ENCODE measurements at regions of chr19 and their contacts with region 1.

Region 1: GRCh38 chr19:41883821-41884733 is 1.1 kb downstream of the ARHGEF1 start:
- DNase-seq: peak; percentile 98
- H3K4me3 ChIP-seq: peak overlapping the region; percentile 89
- H3K4me3 Mint-ChIP-seq: peak overlapping the region; percentile 91
- H3K27ac Mint-ChIP-seq: peak overlapping the region; percentile 83
- H3K4me1 ChIP-seq: peaks cover 24% of the 10 kb centered on the region
- H3K4me1 Mint-ChIP-seq: peaks cover 31% of the 10 kb centered on the region
- H3K27me3 ChIP-seq: no peaks in the 10 kb centered on the region
- H3K27me3 Mint-ChIP-seq: peaks cover 3% of the 10 kb centered on the region
- CTCF ChIP-seq: no peak

Region 2: DNA sequence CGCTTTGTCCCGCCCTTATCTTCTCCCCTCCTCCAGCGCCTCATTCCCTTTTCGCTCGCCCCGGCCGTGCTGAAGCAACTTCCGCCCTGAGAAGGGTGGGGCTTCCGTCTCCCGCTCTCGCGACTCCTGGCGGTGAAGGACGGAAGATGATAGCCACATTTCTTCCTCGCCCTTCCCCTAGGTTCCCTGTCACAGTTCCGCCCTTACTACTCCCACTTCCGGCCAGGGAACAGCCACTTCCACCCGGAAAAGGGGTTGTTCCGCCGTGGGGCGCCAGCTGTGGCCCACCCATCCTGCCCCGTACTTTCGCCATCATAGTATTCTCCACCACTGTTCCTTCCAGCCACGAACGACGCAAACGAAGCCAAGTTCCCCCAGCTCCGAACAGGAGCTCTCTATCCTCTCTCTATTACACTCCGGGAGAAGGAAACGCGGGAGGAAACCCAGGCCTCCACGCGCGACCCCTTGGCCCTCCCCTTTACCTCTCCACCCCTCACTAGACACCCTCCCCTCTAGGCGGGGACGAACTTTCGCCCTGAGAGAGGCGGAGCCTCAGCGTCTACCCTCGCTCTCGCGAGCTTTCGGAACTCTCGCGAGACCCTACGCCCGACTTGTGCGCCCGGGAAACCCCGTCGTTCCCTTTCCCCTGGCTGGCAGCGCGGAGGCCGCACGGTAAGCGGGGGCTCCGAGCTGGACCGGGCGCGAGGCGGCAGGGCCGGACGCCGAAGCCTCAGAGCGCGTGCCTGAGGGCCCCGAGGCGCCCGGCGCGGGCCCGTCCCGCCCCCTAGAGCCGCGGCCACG is 24.3 kb before region 1 on chr19 and contains the start of gene RPS19:
- CTCF ChIA-PET with region 1: interaction called, 5 read pairs
- POLR2A ChIA-PET with region 1: interaction called, 12 read pairs
- intact Hi-C with region 1: no loop called
- DNase-seq: peak; percentile 98 to 99
- H3K4me3 ChIP-seq: peak within 1 kb of the TSS; percentile 88
- H3K4me3 Mint-ChIP-seq: peak within 1 kb of the TSS; percentile 84
- H3K27ac Mint-ChIP-seq: peak within 1 kb of the TSS; percentile 94
- H3K4me1 ChIP-seq: peaks cover 18% of the 10 kb centered on the region
- H3K4me1 Mint-ChIP-seq: peaks cover 5% of the 10 kb centered on the region
- H3K27me3 ChIP-seq: no peaks in the 10 kb centered on the region
- H3K27me3 Mint-ChIP-seq: peaks cover 1% of the 10 kb centered on the region
- CTCF ChIP-seq: peak; percentile 63 to 81
- total RNA-seq, gene RPS19: 3,297 and 3,418 TPM in 2 replicates

Region 3: GRCh38 chr19:41904118-41904870 is 20.2 kb after region 1 on chr19:
- CTCF ChIA-PET with region 1: interaction called, 3 read pairs
- POLR2A ChIA-PET with region 1: no interaction called
- intact Hi-C with region 1: loop called (anchors 1 kb)
- DNase-seq: peak; percentile 92 to 97
- H3K4me3 ChIP-seq: no peak overlapping the region
- H3K4me3 Mint-ChIP-seq: peak overlapping the region; percentile 71
- H3K27ac Mint-ChIP-seq: peak overlapping the region; percentile 98
- H3K4me1 ChIP-seq: peaks cover 26% of the 10 kb centered on the region
- H3K4me1 Mint-ChIP-seq: peaks cover 28% of the 10 kb centered on the region
- H3K27me3 ChIP-seq: no peaks in the 10 kb centered on the region
- H3K27me3 Mint-ChIP-seq: no peaks in the 10 kb centered on the region
- CTCF ChIP-seq: no peak

Region 4: DNA sequence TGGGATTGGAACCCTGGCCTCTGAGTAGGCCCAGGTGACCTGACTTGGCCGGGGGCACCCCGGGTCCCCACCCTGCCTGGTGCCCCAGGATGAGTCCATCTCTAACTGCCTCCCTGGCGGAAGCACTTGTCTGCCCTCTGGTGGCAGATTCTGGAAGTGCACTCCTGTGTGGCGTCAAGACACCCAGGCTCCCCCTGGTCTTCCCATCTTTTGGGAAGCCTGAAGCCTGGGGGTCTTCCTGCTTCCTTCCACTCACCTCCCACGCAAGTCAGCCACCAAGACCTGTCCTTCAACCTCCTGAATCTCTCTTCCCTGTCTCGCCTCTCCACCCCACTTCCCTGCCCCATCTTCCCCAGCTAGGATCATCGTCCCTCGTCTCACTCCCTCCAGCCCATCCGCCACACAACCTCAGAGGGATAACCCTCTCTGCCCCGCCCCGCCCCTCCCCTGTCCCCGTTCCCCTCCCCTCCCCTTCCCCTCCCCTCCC is 67.7 kb after region 1 on chr19:
- CTCF ChIA-PET with region 1: interaction called, 5 read pairs
- POLR2A ChIA-PET with region 1: interaction called, 4 read pairs
- intact Hi-C with region 1: loop called (anchors 1 kb)
- DNase-seq: peak; percentile 84 to 89
- H3K4me3 ChIP-seq: no peak overlapping the region
- H3K4me3 Mint-ChIP-seq: no peak overlapping the region
- H3K27ac Mint-ChIP-seq: no peak overlapping the region
- H3K4me1 ChIP-seq: no peaks in the 10 kb centered on the region
- H3K4me1 Mint-ChIP-seq: no peaks in the 10 kb centered on the region
- H3K27me3 ChIP-seq: no peaks in the 10 kb centered on the region
- H3K27me3 Mint-ChIP-seq: no peaks in the 10 kb centered on the region
- CTCF ChIP-seq: peak; percentile 98 to 99

Region 5: GRCh38 chr19:42075616-42076379 is 191.7 kb after region 1 on chr19 and contains the start of gene ZNF574:
- CTCF ChIA-PET with region 1: interaction called, 3 read pairs
- POLR2A ChIA-PET with region 1: no interaction called
- intact Hi-C with region 1: loop called (anchors 5 kb)
- DNase-seq: peak; percentile 99
- H3K4me3 ChIP-seq: peak within 1 kb of the TSS; percentile 92
- H3K4me3 Mint-ChIP-seq: peak within 1 kb of the TSS; percentile 92
- H3K27ac Mint-ChIP-seq: peak within 1 kb of the TSS; percentile 99
- H3K4me1 ChIP-seq: peaks cover 11% of the 10 kb centered on the region; the same call in 1 of the 2 replicates
- H3K4me1 Mint-ChIP-seq: peaks cover 19% of the 10 kb centered on the region
- H3K27me3 ChIP-seq: no peaks in the 10 kb centered on the region
- H3K27me3 Mint-ChIP-seq: no peaks in the 10 kb centered on the region
- CTCF ChIP-seq: no peak
- total RNA-seq, gene ZNF574: 22.4 and 22.7 TPM in 2 replicates

Measured in Caco-2 (cell line).